Ovary (tissue), 10 donors: ENCODE measurements at regions of chr1 and their contacts with region 1.

Region 1: GRCh38 chr1:56590520-56591011 is 11.2 kb upstream of the PLPP3 start:
- DNase-seq: no peak
- H3K4me3 ChIP-seq: no peak overlapping the region
- H3K27ac ChIP-seq: no peak overlapping the region
- H3K4me1 ChIP-seq: no peaks in the 10 kb centered on the region
- H3K27me3 ChIP-seq: no peaks in the 10 kb centered on the region
- CTCF ChIP-seq: no peak
- EP300 ChIP-seq: no peak
- POLR2A ChIP-seq: no peak

Region 2: GRCh38 chr1:55131801-55132200 is 1458.8 kb before region 1 on chr1:
- intact Hi-C with region 1: loop called in 1 of 4 experiments (anchors 10 kb)
- DNase-seq: no peak
- H3K4me3 ChIP-seq: no peak overlapping the region
- H3K27ac ChIP-seq: no peak overlapping the region
- H3K4me1 ChIP-seq: no peaks in the 10 kb centered on the region
- H3K27me3 ChIP-seq: no peaks in the 10 kb centered on the region
- CTCF ChIP-seq: no peak
- EP300 ChIP-seq: no peak
- POLR2A ChIP-seq: no peak

Region 3: DNA sequence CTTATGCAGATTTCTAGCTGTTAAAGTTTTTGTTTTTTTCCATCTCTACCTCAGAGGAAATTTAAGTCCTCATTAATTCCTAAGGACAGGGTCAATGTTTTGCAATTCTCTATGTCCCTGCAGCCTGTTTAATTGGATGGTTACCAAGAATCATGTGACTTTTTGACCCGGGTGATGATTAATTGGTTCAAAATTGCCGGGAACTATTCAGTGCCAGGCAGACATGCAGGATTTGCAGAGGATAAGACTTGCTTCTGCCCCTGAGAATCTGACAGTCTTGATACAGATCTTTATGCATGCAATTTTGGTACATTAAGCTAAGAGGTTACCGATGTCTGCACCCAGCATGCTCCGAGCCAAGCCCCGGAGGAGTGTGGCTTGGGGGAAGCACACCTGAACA is 99.1 kb before region 1 on chr1:
- intact Hi-C with region 1: no loop called
- DNase-seq: no peak
- H3K4me3 ChIP-seq: no peak overlapping the region
- H3K27ac ChIP-seq: no peak overlapping the region
- H3K4me1 ChIP-seq: peaks cover 3% of the 10 kb centered on the region
- H3K27me3 ChIP-seq: no peaks in the 10 kb centered on the region
- CTCF ChIP-seq: no peak
- EP300 ChIP-seq: no peak
- POLR2A ChIP-seq: no peak

Region 4: GRCh38 chr1:56709269-56709880 is 118.8 kb after region 1 on chr1:
- intact Hi-C with region 1: loop called in 1 of 4 experiments (anchors 10 kb)
- DNase-seq: no peak
- H3K4me3 ChIP-seq: no peak overlapping the region
- H3K27ac ChIP-seq: no peak overlapping the region
- H3K4me1 ChIP-seq: no peaks in the 10 kb centered on the region
- H3K27me3 ChIP-seq: no peaks in the 10 kb centered on the region
- CTCF ChIP-seq: peak in 1 of 3 donors; percentile 24
- EP300 ChIP-seq: no peak
- POLR2A ChIP-seq: no peak